CD8-positive, alpha-beta T cell (primary cell): ENCODE measurements at regions of chr7 and their contacts with region 1.

Region 1: GRCh38 chr7:64999165-65000004 is 7.1 kb downstream of the ERV3-1 start:
- DNase-seq: peak in 1 of 9 experiments; percentile 29
- ATAC-seq: no peak
- H3K4me3 ChIP-seq: no peak overlapping the region
- H3K4me3 Mint-ChIP-seq: no peak overlapping the region
- H3K27ac ChIP-seq: no peak overlapping the region
- H3K27ac Mint-ChIP-seq: no peak overlapping the region
- H3K4me1 ChIP-seq: peaks cover under 1% of the 10 kb centered on the region
- H3K4me1 Mint-ChIP-seq: peaks cover 21% of the 10 kb centered on the region
- H3K27me3 ChIP-seq: no peaks in the 10 kb centered on the region
- H3K27me3 Mint-ChIP-seq: no peaks in the 10 kb centered on the region
- CTCF ChIP-seq: no peak

Region 2: GRCh38 chr7:64978497-64979203 is 20.7 kb before region 1 on chr7:
- CTCF ChIA-PET with region 1: no interaction called
- POLR2A ChIA-PET with region 1: no interaction called
- intact Hi-C with region 1: loop called in 1 of 2 experiments (anchors 2 kb)
- DNase-seq: no peak
- ATAC-seq: no peak
- H3K4me3 ChIP-seq: no peak overlapping the region
- H3K4me3 Mint-ChIP-seq: no peak overlapping the region
- H3K27ac ChIP-seq: no peak overlapping the region
- H3K27ac Mint-ChIP-seq: no peak overlapping the region
- H3K4me1 ChIP-seq: no peaks in the 10 kb centered on the region
- H3K4me1 Mint-ChIP-seq: no peaks in the 10 kb centered on the region
- H3K27me3 ChIP-seq: no peaks in the 10 kb centered on the region
- H3K27me3 Mint-ChIP-seq: no peaks in the 10 kb centered on the region
- CTCF ChIP-seq: no peak